Transverse colon (tissue), 4 donors: ENCODE measurements at regions of chr13 and their contacts with region 1.

Region 1: DNA sequence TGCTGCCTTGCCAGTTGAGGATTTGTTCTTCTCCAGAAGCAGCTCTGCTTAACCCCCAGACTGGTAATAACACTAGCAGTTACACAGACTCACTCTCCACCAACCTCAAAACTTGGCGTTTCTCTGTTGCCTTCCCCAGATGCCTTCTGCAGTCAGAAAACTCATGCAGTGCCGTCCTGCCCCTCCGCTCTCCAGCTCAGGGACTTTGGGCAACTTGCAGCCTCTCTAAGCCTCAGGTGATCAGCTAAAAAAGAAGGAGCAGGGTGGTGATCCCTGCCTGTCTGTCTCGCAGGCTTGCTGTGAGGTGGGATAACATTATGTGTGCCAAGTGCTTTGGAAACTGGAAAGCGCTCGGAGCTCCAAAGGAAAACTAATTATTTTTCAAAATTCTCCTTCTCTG is 391.6 kb downstream of the HS6ST3 start:
- DNase-seq: no peak
- H3K4me3 ChIP-seq: no peak overlapping the region
- H3K27ac ChIP-seq: no peak overlapping the region
- H3K4me1 ChIP-seq: no peaks in the 10 kb centered on the region
- H3K27me3 ChIP-seq: no peaks in the 10 kb centered on the region
- CTCF ChIP-seq: no peak
- EP300 ChIP-seq: no peak
- POLR2A ChIP-seq: no peak

Region 2: DNA sequence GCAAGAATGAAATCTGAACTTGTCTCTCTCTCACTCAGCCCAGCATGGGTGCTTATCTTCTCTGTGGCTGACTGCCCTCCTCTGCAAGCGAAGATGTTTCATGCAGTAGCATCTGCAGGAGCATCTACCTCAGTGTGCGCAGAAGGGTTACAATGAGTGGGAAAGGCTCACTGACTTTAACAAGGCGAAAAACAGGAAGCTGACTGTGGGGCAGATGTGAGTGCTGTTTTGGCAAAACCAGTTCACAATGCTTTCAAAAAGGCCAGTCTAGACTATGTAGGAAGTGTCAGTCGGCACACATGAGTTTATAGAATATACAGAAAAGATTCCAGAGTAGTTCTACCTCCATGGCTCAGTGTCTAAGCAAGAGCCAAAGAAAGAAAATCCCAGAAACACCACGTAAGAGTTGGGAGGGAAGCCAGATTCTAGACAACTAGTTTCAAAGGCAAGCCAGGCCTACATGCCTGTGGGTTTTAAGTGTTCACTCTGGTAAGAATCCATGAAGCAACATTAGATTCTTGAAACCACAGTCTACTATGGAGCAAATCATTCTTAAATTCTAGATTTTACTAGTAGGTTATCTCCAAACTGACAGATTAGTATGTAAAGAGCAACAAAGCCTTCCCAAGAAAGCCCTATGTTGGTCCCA is 1304.7 kb before region 1 on chr13:
- in situ Hi-C with region 1: no loop called
- intact Hi-C with region 1: loop called (anchors 10 kb)
- DNase-seq: no peak
- H3K4me3 ChIP-seq: no peak overlapping the region
- H3K27ac ChIP-seq: no peak overlapping the region
- H3K4me1 ChIP-seq: peaks cover 0 to 15% (median 9%) of the 10 kb centered on the region in 4 donors
- H3K27me3 ChIP-seq: no peaks in the 10 kb centered on the region
- CTCF ChIP-seq: no peak
- EP300 ChIP-seq: no peak
- POLR2A ChIP-seq: no peak

Region 3: GRCh38 chr13:96575423-96576320 is 94.2 kb after region 1 on chr13:
- in situ Hi-C with region 1: no loop called
- intact Hi-C with region 1: no loop called
- DNase-seq: no peak
- H3K4me3 ChIP-seq: no peak overlapping the region
- H3K27ac ChIP-seq: no peak overlapping the region
- H3K4me1 ChIP-seq: no peaks in the 10 kb centered on the region
- H3K27me3 ChIP-seq: no peaks in the 10 kb centered on the region
- CTCF ChIP-seq: no peak
- EP300 ChIP-seq: no peak
- POLR2A ChIP-seq: no peak